BJ (cell line): ENCODE measurements at regions of chrX and their contacts with region 1.

Region 1: DNA sequence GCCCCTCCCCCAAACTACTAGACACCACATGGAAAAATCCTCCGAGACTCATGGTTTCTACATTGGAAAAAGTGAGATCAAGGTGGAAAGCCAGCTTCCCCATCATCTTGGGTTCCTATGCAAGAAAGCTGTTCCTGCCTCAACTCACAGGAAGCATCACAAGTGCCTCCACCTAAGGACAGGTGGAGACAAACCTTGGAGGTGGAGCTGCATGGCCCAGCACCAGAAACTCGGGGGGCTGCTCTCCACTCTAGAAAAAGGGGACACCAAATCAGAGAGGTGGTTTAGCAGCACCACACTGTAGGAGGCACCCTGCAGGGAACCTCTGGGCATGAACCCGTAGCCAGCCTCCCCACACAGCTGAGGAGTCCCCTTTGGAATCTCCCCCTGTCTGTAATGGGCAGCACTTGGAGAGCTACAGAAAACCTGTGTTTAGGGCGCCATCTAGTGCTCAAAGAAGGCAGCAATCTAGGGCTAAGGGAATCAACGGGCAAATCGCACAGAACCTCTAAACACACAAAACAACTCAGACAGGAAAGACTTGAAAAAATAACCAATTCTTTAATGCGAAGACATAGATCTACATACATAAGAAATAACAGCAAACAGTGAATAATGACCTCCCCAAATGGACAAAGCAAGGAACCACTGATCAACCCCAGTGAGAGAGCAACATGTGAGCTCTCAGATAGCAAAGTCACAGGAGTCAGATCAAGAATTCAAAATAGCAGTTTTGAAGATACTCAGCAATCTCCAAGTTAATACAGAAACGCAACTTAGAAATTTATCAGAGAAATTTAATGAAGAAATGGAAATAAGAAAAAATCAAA is 37.0 kb upstream of the ZBTB33 start:
- DNase-seq: peak; percentile 0
- H3K4me3 ChIP-seq: no peak overlapping the region
- H3K27me3 ChIP-seq: no peaks in the 10 kb centered on the region
- CTCF ChIP-seq: peak; percentile 81

Region 2: GRCh38 chrX:119981286-119982070 is 232.2 kb before region 1 on chrX:
- CTCF ChIA-PET with region 1: interaction called, 11 read pairs
- POLR2A ChIA-PET with region 1: no interaction called
- DNase-seq: no peak
- H3K4me3 ChIP-seq: no peak overlapping the region
- H3K27me3 ChIP-seq: no peaks in the 10 kb centered on the region
- CTCF ChIP-seq: peak; percentile 52

Region 3: GRCh38 chrX:119991772-119992155 is 221.9 kb before region 1 on chrX:
- CTCF ChIA-PET with region 1: no interaction called
- POLR2A ChIA-PET with region 1: no interaction called
- DNase-seq: no peak
- H3K4me3 ChIP-seq: no peak overlapping the region
- H3K27me3 ChIP-seq: peaks cover 7% of the 10 kb centered on the region
- CTCF ChIP-seq: no peak

Region 4: DNA sequence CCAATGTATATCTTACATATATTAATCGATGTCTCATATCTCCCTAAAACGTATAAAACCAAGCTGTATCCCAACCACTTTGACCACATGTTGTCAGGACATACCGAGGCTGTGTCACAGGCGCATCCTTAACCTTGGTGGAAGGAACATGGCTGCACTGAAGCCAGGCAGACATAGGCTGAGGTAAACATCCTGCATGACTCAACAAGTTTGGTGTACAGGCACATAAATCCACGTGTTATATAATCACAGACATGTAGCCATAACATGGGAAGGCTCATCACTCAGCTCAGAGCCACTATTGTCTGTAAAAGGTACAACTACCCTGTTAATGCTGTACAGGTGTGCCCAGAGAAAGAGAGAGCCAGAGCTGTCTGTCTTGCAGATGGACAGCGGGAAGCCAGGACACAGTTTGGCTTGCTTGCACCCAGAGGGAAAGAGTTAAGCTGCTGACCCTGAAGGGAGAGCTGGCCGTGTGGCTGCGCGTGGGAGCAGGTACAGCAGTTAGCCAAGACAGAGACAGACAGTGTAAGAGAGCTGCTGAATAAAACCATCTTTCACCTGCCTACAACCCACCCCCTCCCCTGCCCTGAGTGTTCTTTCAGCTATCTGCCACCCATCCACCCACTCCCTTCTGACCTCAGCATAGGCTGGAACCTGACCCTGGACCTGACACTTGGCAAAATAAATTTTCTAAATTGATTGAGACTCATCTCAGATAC is 14.7 kb after region 1 on chrX:
- CTCF ChIA-PET with region 1: interaction called, 19 read pairs
- POLR2A ChIA-PET with region 1: no interaction called
- DNase-seq: no peak
- H3K4me3 ChIP-seq: no peak overlapping the region
- H3K27me3 ChIP-seq: no peaks in the 10 kb centered on the region
- CTCF ChIP-seq: no peak

Region 5: DNA sequence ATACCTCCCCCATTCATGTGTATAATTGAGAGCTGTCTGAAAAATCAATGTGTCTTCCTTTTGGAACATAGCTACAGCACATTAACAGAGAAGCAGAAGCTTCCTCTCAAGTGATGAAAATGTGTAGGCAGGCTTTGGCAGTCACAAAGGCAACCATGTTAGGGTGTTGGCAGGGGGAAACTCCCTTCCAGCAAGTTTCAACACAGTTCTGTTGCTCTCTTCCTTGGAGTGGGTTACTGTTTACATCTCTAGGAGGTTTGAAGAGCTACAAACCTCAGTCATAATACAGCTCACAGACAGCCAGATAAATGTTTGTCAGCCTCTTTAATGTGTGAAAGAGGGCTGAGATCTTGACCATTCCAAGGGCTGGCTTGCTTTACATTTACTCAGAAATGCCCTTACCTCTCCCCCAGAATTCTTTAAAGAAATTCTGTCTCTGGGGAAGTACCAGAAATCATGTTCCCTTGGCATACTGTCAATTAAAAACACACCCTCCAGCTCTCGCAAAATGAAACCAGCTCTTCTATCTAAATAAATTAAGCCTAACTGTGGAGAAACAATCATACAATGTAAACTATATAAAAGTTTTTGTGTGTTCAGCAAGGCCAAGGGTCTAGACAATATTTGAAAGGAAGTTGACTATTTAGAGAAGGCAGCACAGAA is 55.9 kb after region 1 on chrX:
- CTCF ChIA-PET with region 1: no interaction called
- POLR2A ChIA-PET with region 1: no interaction called
- DNase-seq: no peak
- H3K4me3 ChIP-seq: no peak overlapping the region
- H3K27me3 ChIP-seq: no peaks in the 10 kb centered on the region
- CTCF ChIP-seq: no peak